HEK293 (cell line): ENCODE measurements at regions of chr7 and their contacts with region 1.

Region 1: DNA sequence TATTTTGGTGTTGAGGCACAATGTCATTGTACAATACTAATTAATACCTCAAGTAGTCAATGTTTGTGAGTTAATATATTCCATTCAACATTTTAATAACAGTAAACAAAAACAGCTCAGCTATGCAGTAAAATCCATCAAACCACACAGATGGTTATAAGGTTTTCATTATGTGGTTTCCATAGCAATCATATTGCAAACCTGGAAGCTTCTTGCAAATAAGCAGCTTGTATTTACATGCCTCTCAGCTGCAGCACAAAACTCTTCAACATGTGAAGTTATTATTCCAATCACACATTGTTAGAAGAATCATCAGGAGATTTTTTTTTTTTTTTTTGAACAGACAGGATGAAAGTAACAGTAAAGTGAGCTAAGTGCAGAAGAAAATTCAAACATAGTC is 170.2 kb downstream of the SKAP2 start:
- H3K4me3 ChIP-seq: no peak overlapping the region
- H3K27ac ChIP-seq: no peak overlapping the region
- H3K4me1 ChIP-seq: peaks cover 25% of the 10 kb centered on the region
- CTCF ChIP-seq: no peak

Region 2: GRCh38 chr7:26562841-26563240 is 131.3 kb before region 1 on chr7:
- CTCF ChIA-PET with region 1: no interaction called
- POLR2A ChIA-PET with region 1: no interaction called
- H3K4me3 ChIP-seq: no peak overlapping the region
- H3K27ac ChIP-seq: no peak overlapping the region
- H3K4me1 ChIP-seq: peaks cover 13% of the 10 kb centered on the region
- CTCF ChIP-seq: no peak

Region 3: DNA sequence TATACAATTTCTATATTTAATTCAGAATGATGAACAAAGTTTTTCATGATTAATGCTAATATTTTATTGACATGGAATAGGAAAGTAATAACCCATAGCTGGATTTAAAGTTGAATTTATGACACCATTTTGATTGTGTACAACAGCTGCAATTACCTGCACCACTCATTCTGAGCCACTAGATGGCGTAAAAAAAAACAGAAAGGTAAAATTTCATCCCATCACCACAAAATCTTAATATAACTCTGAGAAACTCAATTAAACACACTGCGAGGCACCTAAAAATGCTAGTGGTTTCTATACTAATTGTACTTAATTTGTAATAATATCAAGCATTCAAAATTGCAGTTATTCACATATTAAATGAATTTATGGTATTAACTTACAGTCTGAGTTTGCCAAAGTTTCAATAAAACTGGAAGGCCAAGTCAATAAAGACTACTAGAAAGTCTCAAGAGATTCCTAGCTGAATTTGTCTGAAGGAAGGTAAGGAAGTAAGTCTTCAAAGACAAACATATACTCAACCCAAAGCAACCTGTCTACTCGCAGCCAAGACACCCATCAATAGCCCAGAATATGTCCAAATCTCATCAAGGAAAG is 12.2 kb before region 1 on chr7:
- CTCF ChIA-PET with region 1: interaction called, 23 read pairs
- POLR2A ChIA-PET with region 1: no interaction called
- H3K4me3 ChIP-seq: no peak overlapping the region
- H3K27ac ChIP-seq: no peak overlapping the region
- H3K4me1 ChIP-seq: peaks cover 33% of the 10 kb centered on the region
- CTCF ChIP-seq: no peak

Region 4: GRCh38 chr7:27423272-27423671 is 729.1 kb after region 1 on chr7:
- CTCF ChIA-PET with region 1: no interaction called
- POLR2A ChIA-PET with region 1: no interaction called
- H3K4me3 ChIP-seq: no peak overlapping the region
- H3K27ac ChIP-seq: no peak overlapping the region
- H3K4me1 ChIP-seq: peaks cover 11% of the 10 kb centered on the region
- CTCF ChIP-seq: no peak

Region 5: DNA sequence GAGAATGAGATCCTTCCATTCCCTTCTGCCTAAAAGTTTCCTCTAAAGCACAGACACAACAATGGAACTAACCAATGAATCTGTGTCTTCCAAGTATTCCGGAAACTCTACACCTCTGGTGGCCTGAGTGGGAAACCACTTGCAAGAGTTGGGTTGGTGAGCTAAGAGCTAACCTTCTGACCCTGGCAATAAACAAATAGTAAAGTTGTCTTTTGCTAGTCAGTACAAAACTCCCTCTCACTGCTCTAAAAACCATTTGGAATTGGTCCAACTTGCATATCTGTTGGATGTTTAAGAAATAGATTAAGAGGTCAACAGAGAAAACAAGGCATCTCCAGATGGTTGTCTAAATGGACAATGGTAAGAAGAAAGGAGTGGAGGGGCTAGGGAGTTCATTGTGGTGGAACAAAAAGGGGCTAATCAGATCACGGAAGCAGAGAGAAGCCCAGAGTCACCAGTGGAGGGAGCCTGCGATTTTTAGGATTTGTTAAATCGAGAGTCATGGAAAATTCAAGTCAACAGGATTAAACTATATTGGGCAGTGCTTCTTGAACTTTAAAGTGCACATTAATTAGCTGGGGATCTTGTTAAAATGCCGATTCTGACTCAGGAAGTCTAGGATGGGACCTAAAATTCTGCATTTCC is 740.7 kb after region 1 on chr7:
- CTCF ChIA-PET with region 1: no interaction called
- POLR2A ChIA-PET with region 1: no interaction called
- H3K4me3 ChIP-seq: no peak overlapping the region
- H3K27ac ChIP-seq: no peak overlapping the region
- H3K4me1 ChIP-seq: peaks cover 10% of the 10 kb centered on the region
- CTCF ChIP-seq: no peak